Activated CD4-positive, alpha-beta T cell treated with anti-CD3 and anti-CD28 coated beads for 36 hours (primary cell): ENCODE measurements at regions of chr11 and their contacts with region 1.

Region 1: DNA sequence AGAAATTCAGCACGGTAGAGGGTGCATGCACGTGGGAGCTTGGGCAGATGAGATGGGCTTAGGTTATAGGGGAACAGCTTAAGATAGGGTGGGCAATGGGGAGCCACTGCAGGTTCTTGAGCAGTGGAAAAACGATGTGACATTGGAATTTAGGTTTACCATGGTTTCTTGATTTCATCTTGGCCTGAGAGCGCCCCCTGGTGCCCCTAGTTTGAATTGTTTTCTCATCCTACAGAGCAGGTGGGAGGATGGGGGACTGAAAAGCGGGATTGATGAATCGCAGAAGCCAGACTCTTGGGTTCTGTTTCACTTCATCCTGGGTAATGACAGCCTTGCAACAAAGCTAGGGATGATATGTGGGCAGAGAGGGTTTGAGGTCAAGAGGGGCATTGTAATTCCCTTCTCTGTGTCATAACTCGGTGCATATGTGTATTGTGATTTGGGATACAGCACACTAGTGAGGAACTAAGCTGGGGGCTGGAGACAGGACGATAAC is 6.7 kb upstream of the MCAM start:
- DNase-seq: peak; percentile 90
- ATAC-seq: peak; percentile 21
- H3K4me3 Mint-ChIP-seq: no peak overlapping the region
- H3K27ac Mint-ChIP-seq: no peak overlapping the region
- H3K4me1 Mint-ChIP-seq: peaks cover 20% of the 10 kb centered on the region
- H3K27me3 Mint-ChIP-seq: peaks cover 3% of the 10 kb centered on the region

Region 2: GRCh38 chr11:118997627-118998387 is 325.8 kb before region 1 on chr11 and contains the start of gene CENATAC:
- CTCF ChIA-PET with region 1: no interaction called
- POLR2A ChIA-PET with region 1: no interaction called
- intact Hi-C with region 1: loop called in 1 of 2 experiments (anchors 5 kb)
- DNase-seq: peak; percentile 98
- ATAC-seq: peak; percentile 93
- H3K4me3 Mint-ChIP-seq: peak within 1 kb of the TSS; percentile 88
- H3K27ac Mint-ChIP-seq: peak within 1 kb of the TSS; percentile 98
- H3K4me1 Mint-ChIP-seq: peaks cover 32% of the 10 kb centered on the region
- H3K27me3 Mint-ChIP-seq: no peaks in the 10 kb centered on the region
- total RNA-seq, gene CENATAC: 23.7 to 26.2 TPM

Region 3: DNA sequence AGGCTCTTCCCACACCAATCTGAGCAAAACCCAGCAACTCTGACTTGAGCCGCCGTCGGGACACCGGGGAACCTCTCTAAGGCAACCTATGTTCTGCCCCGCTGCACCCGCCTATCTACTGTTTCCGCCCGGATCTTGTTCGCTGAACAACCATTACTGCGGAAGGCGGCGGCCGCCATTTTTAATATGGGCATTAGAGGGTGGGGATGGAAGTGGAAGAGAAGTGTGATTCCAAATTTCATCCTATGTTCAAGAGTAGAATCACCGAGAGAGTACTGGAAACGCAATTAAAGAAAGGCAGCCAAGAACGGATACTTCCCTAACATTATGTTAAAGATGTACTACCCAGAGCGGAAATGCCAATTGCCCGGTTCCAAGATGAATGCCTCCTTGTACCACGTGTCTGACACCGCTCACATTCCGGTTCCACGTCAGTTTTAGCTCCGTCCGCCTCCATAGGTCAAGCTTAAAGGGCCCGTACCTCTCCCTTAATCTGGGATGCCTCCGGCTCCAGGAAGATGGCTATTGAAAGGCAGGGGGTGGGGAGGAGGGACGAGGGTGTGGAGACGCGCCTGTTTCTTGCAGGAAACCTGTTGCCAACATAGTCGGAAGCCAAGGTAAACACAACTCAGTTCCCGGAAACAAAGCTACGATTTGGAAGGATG is 221.7 kb before region 1 on chr11 and contains the start of gene DPAGT1:
- CTCF ChIA-PET with region 1: interaction called, 5 read pairs
- POLR2A ChIA-PET with region 1: no interaction called
- intact Hi-C with region 1: loop called in 1 of 2 experiments (anchors 2 kb)
- DNase-seq: peak; percentile 93
- ATAC-seq: peak; percentile 86
- H3K4me3 Mint-ChIP-seq: peak within 1 kb of the TSS; percentile 95
- H3K27ac Mint-ChIP-seq: peak within 1 kb of the TSS; percentile 100
- H3K4me1 Mint-ChIP-seq: peaks cover 42% of the 10 kb centered on the region
- H3K27me3 Mint-ChIP-seq: no peaks in the 10 kb centered on the region
- total RNA-seq, gene DPAGT1: 57.8 to 73.5 TPM

Region 4: DNA sequence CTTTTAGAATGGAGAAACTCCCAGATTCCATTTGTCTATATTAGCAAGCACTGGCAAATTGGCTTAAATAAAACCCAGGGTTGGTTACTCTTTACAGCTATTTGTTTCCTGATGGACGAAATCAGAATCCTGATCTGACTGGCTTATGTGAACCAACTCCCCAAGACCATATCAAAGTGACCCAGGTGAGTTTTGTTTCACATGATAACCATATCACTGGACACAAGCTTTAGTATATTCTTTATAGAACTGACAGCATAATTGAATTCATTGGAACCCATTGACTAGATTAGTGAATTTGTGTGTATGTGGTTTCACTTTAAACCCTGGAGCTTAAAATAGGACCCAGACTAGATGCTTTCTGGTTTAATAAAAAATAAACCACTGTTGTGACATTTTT is 45.9 kb before region 1 on chr11:
- CTCF ChIA-PET with region 1: interaction called, 11 read pairs
- POLR2A ChIA-PET with region 1: interaction called, 3 read pairs
- intact Hi-C with region 1: no loop called
- DNase-seq: no peak
- ATAC-seq: no peak
- H3K4me3 Mint-ChIP-seq: no peak overlapping the region
- H3K27ac Mint-ChIP-seq: no peak overlapping the region
- H3K4me1 Mint-ChIP-seq: peaks cover 10% of the 10 kb centered on the region
- H3K27me3 Mint-ChIP-seq: no peaks in the 10 kb centered on the region

Region 5: GRCh38 chr11:119334174-119334930 is 10.8 kb after region 1 on chr11 and contains the start of gene RNF26:
- CTCF ChIA-PET with region 1: interaction called, 69 read pairs
- POLR2A ChIA-PET with region 1: interaction called, 7 read pairs
- intact Hi-C with region 1: loop called (anchors 1 kb)
- DNase-seq: peak; percentile 96
- ATAC-seq: peak; percentile 96
- H3K4me3 Mint-ChIP-seq: peak within 1 kb of the TSS; percentile 99
- H3K27ac Mint-ChIP-seq: peak within 1 kb of the TSS; percentile 99
- H3K4me1 Mint-ChIP-seq: peaks cover 29% of the 10 kb centered on the region
- H3K27me3 Mint-ChIP-seq: peaks cover 7% of the 10 kb centered on the region
- total RNA-seq, gene RNF26: 29.9 TPM

Region 6: DNA sequence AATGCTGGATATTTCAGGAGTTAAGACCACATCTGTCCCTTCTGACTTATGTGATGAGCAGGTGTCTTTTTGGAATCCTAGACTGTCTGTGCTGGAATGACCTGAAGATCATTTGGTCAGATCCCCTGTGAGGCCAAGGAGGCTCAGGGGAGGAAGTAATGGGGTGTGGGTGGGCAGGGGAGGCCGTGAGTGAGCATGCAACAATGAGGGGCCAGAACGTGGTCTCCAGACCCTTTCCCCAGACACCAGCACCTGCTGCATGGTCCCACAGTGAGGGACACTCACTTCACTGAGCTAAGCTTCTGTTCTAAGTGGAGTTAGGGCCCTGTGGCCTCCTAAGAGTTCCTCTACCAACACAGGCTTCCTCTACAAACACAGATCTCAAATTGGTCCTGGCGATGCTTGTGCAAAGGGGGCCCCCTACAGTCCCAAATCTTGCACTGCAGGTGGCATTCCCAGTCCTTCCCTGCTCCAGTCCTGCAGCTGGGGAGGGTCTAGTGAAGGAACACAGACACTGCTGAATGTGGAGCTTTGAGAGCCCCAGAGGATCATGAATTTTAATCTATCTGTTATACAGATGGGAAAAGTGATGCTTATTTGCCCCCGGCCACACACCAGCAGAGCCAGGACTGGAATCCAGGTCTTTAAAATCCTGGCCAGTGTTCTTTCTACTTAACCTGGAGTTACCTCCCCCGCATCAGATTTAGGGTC is 50.5 kb after region 1 on chr11:
- CTCF ChIA-PET with region 1: interaction called, 11 read pairs
- POLR2A ChIA-PET with region 1: no interaction called
- intact Hi-C with region 1: no loop called
- DNase-seq: peak; percentile 71
- ATAC-seq: peak; percentile 55
- H3K4me3 Mint-ChIP-seq: no peak overlapping the region
- H3K27ac Mint-ChIP-seq: no peak overlapping the region
- H3K4me1 Mint-ChIP-seq: peaks cover 6% of the 10 kb centered on the region
- H3K27me3 Mint-ChIP-seq: peaks cover 2% of the 10 kb centered on the region